ENCODE measurements at regions of chr13 and their contacts with region 1.

Region 1: GRCh38 chr13:95156208-95156607 is 145.0 kb downstream of the ABCC4 start:
- DNase-seq: no peak

Region 2: DNA sequence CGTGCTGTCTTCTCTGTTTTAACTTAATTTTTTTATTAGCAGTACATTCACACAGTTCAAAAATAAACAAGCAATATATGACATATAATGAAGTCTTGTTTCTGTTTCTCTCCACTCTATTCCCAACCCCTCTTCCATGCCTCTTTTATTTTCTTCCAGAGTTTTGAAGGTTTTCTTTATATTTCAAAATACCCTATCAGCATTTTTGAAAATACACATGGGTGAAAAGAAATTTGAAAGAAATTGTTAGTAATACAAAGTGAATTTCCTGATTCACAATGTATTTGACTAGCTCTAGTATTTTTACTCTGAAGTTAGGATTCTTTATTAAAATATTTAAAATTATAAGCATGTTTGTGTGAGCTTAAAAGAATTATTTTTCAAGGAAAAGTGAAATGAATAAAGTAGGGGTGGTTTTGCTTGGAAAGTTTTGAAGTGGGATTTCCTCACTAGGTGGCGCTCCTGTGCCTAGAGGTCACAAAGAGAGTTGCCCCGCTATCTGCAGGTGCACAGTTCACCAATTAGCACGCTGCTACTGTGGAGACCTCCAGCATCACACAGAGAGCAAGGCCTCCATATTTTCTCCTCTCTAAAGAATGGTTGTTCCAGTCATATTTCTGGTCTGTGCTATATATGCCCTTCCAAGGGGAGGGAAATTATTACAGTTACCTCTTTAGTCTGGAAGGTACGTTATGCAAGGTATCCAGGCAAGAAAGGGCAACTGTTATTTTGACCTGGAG is 481.4 kb before region 1 on chr13:
- intact Hi-C with region 1: loop called (anchors 10 kb)
- DNase-seq: peak in 4 of 10 donors; percentile 32 to 73 (median 52)

Region 3: GRCh38 chr13:94956417-94957110 is 199.6 kb before region 1 on chr13:
- intact Hi-C with region 1: no loop called
- DNase-seq: peak in 7 of 10 donors; percentile 16 to 90 (median 49)

Measured in posterior cingulate gyrus (tissue), 11 donors.